Right lobe of liver (tissue), 6 donors: ENCODE measurements at regions of chr2 and their contacts with region 1.

Region 1: GRCh38 chr2:38734299-38735058 is 16.7 kb downstream of the SRSF7 start:
- DNase-seq: peak in 1 of 3 donors; percentile 36
- ATAC-seq: peak in 1 of 4 donors; percentile 5
- H3K4me3 ChIP-seq: no peak overlapping the region
- H3K27ac ChIP-seq: peak overlapping the region in 2 of 3 donors; percentile 73 to 84
- H3K4me1 ChIP-seq: peaks cover 0 to 71% (median 13%) of the 10 kb centered on the region in 4 donors
- H3K27me3 ChIP-seq: no peaks in the 10 kb centered on the region
- CTCF ChIP-seq: no peak
- POLR2A ChIP-seq: no peak

Region 2: GRCh38 chr2:38535744-38536506 is 198.6 kb before region 1 on chr2:
- intact Hi-C with region 1: loop called in 1 of 2 experiments (anchors 10 kb)
- DNase-seq: peak; percentile 86 to 89 (median 87)
- ATAC-seq: peak; percentile 98 to 99 (median 98)
- H3K4me3 ChIP-seq: peak overlapping the region; percentile 44 to 69 (median 55)
- H3K27ac ChIP-seq: peak overlapping the region in 1 of 3 donors; percentile 55
- H3K4me1 ChIP-seq: no peaks in the 10 kb centered on the region
- H3K27me3 ChIP-seq: no peaks in the 10 kb centered on the region
- CTCF ChIP-seq: peak; percentile 90 to 94 (median 92)
- POLR2A ChIP-seq: no peak

Region 3: DNA sequence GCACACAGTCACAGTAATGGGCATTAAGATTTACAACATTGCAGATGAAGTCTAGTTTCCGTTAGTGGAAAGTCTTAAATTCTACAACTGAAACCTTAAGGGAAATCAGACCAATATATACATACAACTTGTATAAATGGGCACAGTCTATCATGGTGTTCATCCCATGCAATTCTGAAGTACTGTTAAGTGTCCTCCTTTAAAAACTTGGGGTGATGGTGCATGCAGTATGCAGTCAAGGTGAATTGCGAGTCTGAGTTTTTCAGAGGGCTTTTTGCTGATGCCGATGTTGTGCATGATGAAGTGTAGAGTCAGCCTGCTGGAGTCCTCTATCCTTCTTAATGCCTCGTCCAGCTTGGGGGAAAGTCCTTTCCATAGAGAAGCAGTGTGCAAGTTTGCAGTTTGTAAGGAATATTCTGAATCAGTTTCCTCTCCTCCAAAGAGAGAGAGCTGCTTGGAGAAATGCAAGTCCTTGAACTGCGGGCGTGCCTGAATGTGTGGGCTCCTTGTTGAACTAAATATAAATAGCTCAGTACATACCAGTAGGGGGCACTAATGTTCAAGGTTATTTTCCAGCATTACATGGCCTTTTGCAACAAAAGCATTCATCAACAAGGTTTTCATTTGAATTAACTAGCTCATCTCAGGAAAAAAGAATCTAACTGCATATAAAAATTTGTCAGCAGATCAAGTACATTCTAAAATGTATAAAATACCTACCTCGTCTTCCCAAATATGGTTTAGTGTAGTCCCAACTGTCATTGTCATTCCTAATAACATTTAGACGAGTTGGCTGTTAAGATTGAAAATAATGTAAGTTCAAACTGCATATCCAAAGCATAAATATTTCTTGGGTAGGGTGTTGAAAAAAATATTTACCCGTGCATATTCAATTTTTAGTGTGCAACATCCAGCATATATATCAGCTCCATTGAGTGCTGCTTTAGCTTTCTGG is 153.0 kb before region 1 on chr2:
- intact Hi-C with region 1: loop called in 1 of 2 experiments (anchors 10 kb)
- DNase-seq: no peak
- ATAC-seq: peak; percentile 82 to 95 (median 90)
- H3K4me3 ChIP-seq: no peak overlapping the region
- H3K27ac ChIP-seq: no peak overlapping the region
- H3K4me1 ChIP-seq: no peaks in the 10 kb centered on the region
- H3K27me3 ChIP-seq: no peaks in the 10 kb centered on the region
- CTCF ChIP-seq: peak; percentile 53 to 84 (median 64)
- POLR2A ChIP-seq: no peak

Region 4: DNA sequence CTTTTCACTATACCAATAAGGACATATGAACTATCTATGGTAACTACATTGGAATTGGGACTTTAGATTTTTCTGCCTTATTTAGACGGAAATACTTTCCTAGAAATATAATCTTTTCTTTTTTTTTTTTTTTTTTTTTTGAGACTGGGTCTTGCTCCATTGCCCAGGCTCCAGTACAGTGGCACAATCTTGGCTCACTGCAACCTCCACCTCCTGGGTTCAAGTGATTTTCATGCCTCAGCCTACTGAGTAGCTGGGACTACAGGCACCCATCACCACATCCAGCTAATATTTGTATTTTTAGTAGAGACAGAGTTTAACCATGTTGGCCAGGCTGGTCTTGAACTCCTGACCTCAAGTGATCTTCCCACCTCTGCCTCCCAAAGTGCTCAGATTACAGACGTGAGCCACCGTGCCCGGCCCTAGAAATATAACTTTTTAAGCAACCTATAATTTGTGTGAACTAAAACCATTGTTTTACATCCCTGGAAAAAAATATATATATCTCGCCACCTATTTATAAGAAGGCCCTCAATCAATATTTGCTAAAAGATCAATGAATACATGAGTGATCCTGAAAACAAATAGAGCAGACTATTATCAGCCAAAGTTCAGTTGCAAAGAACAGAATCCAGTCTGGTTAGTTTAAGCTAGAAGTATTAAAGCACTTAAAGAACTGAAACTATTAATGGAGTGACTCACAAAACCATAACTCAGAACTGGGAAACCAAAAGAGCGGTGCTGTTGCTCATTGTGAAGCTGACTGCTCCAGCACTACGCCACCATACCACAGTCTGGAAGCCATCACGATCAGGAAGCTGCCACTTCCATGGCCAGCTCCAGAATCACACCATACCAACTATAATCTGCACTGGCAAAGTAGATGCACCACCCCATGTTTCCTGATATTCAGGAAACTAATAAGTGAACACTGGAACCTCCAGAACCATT is 123.4 kb before region 1 on chr2:
- intact Hi-C with region 1: no loop called
- DNase-seq: no peak
- ATAC-seq: peak; percentile 46 to 80 (median 54)
- H3K4me3 ChIP-seq: no peak overlapping the region
- H3K27ac ChIP-seq: no peak overlapping the region
- H3K4me1 ChIP-seq: peaks cover 0 to 8% (median 0%) of the 10 kb centered on the region in 4 donors
- H3K27me3 ChIP-seq: no peaks in the 10 kb centered on the region
- CTCF ChIP-seq: no peak
- POLR2A ChIP-seq: no peak